WTC11 (cell line): ENCODE measurements at regions of chr11 and their contacts with region 1.

Region 1: DNA sequence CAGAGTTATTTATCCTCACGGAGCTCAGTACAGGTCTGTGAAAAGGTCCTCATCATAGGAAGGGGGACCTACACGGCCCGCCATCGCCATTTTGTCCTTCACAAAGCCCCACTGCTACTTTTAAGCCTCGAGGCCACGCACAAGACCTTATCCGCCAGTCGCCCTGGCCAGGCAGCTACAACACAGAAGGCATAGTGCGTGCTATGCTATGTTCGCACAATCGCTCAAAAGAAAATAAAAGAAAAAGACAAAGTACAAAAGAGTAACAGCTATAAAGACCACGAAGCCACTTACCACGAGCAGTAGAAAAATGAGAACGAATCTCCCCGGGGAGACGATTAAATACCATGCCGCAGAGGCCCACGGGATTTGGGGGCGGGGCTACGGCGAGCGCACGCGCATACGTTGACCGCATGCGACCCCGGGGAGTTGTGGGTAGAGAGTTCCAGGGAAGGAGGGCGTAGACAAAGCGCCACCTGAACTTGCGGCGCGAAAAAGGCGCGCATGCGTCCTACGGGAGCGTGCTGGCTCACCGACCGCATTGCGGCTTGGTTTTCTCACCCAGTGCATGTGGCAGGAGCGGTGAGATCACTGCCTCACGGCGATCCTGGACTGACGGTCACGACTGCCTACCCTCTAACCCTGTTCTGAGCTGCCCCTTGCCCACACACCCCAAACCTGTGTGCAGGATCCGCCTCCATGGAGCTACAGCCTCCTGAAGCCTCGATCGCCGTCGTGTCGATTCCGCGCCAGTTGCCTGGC is 16.4 kb upstream of the WDR74 start:
- DNase-seq: peak; percentile 98
- ATAC-seq: peak; percentile 73
- H3K4me3 Mint-ChIP-seq: peak overlapping the region; percentile 99
- H3K27ac Mint-ChIP-seq: peak overlapping the region; percentile 99
- H3K4me1 Mint-ChIP-seq: peaks cover 60% of the 10 kb centered on the region
- H3K27me3 Mint-ChIP-seq: 0 out of 2 replicates have a peak, but pooled peaks cover 4% of the 10 kb centered on the region
- CTCF ChIP-seq: no peak

Region 2: DNA sequence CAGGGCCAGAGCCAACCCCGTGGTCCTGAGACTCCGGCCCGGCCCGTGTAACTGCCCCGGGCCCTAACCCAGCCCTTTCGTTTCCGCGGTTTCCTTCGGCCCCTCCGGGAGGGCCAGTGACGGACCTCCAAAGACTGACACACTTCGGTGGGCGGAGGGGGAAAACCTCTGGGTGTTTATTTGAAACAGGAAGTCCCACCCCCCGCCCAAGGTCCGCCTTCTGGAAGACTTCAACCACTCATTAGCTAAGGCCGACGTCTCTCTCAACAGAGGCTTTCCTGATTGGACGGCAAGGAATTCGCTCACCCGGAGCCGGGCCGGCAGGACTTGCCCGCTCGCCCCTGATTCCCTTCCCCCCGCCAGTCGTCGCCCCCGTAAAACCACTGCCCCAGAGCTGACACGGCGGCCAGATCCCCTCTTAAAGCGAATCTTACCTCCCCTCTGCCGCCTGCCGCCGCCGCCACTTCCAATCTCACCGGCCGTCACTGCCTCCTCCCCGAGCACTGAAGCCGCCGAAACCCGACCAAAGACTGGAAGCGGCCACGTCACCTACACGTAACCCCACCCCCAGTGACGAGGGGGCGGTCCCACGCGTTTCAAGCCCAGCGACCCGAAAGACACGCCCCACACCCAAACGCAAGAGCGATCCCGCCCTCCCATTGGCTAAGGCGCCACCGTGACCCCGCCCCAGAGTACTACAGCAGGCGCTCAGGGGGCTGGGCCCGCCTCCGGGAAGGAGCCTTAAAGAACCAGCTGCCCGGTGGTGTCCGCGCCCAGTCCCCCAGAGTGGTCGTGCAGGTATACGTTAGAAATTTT is 24.0 kb before region 1 on chr11 and contains the start of gene STX5:
- CTCF ChIA-PET with region 1: interaction called, 3 read pairs
- POLR2A ChIA-PET with region 1: interaction called, 15 read pairs
- DNase-seq: peak; percentile 100
- ATAC-seq: peak; percentile 91
- H3K4me3 Mint-ChIP-seq: peak within 1 kb of the TSS; percentile 100
- H3K27ac Mint-ChIP-seq: peak within 1 kb of the TSS; percentile 100
- H3K4me1 Mint-ChIP-seq: peaks cover 16% of the 10 kb centered on the region
- H3K27me3 Mint-ChIP-seq: no peaks in the 10 kb centered on the region
- CTCF ChIP-seq: no peak
- total RNA-seq, gene STX5: 27.2 to 30.2 TPM (median 28.0 TPM) in 3 replicates

Region 3: GRCh38 chr11:62841361-62842184 is 14.2 kb before region 1 on chr11:
- CTCF ChIA-PET with region 1: interaction called, 4 read pairs
- POLR2A ChIA-PET with region 1: interaction called, 83 read pairs
- DNase-seq: peak; percentile 87
- ATAC-seq: peak; percentile 77
- H3K4me3 Mint-ChIP-seq: no peak overlapping the region
- H3K27ac Mint-ChIP-seq: no peak overlapping the region
- H3K4me1 Mint-ChIP-seq: peaks cover 15% of the 10 kb centered on the region
- H3K27me3 Mint-ChIP-seq: no peaks in the 10 kb centered on the region
- CTCF ChIP-seq: no peak

Region 4: GRCh38 chr11:62880803-62881578 is 25.2 kb after region 1 on chr11 and contains the start of gene SLC3A2:
- CTCF ChIA-PET with region 1: interaction called, 14 read pairs
- POLR2A ChIA-PET with region 1: interaction called, 44 read pairs
- DNase-seq: peak; percentile 87
- ATAC-seq: peak; percentile 80
- H3K4me3 Mint-ChIP-seq: peak within 1 kb of the TSS; percentile 99
- H3K27ac Mint-ChIP-seq: peak within 1 kb of the TSS; percentile 100
- H3K4me1 Mint-ChIP-seq: peaks cover 49% of the 10 kb centered on the region
- H3K27me3 Mint-ChIP-seq: peaks cover 3% of the 10 kb centered on the region; the same call in 1 of the 2 replicates
- CTCF ChIP-seq: peak; percentile 22; the same call in 1 of the 2 replicates
- total RNA-seq, gene SLC3A2: 244 to 334 TPM (median 265 TPM) in 3 replicates

Region 5: GRCh38 chr11:62889484-62890437 is 34.0 kb after region 1 on chr11:
- CTCF ChIA-PET with region 1: interaction called, 6 read pairs
- POLR2A ChIA-PET with region 1: interaction called, 14 read pairs
- DNase-seq: no peak
- ATAC-seq: peak; percentile 17
- H3K4me3 Mint-ChIP-seq: no peak overlapping the region
- H3K27ac Mint-ChIP-seq: peak overlapping the region; percentile 96
- H3K4me1 Mint-ChIP-seq: 0 out of 2 replicates have a peak, but pooled peaks cover 3% of the 10 kb centered on the region
- H3K27me3 Mint-ChIP-seq: no peaks in the 10 kb centered on the region
- CTCF ChIP-seq: no peak

Region 6: GRCh38 chr11:64386306-64386702 is 1530.6 kb after region 1 on chr11:
- CTCF ChIA-PET with region 1: no interaction called
- POLR2A ChIA-PET with region 1: interaction called, 10 read pairs
- DNase-seq: no peak
- ATAC-seq: no peak
- H3K4me3 Mint-ChIP-seq: no peak overlapping the region
- H3K27ac Mint-ChIP-seq: no peak overlapping the region
- H3K4me1 Mint-ChIP-seq: peaks cover 3% of the 10 kb centered on the region
- H3K27me3 Mint-ChIP-seq: peaks cover 40% of the 10 kb centered on the region
- CTCF ChIP-seq: no peak